ENCODE measurements at regions of chr1 and their contacts with region 1.

Region 1: GRCh38 chr1:161165742-161166668 is at the start of gene PPOX:
- DNase-seq: peak; percentile 92
- ATAC-seq: peak; percentile 97
- H3K4me3 ChIP-seq: peak within 1 kb of the TSS; percentile 86
- H3K27ac ChIP-seq: peak within 1 kb of the TSS; percentile 54
- H3K4me1 ChIP-seq: peaks cover 8% of the 10 kb centered on the region
- H3K27me3 ChIP-seq: no peaks in the 10 kb centered on the region
- CTCF ChIP-seq: peak; percentile 50 to 67 (median 61)
- EP300 ChIP-seq: no peak; a peak in 1 of 4 replicates
- POLR2A ChIP-seq: peak; percentile 88
- RAD21 ChIP-seq: peak; percentile 26; the same call in 1 of the 2 replicates
- polyA plus RNA-seq, gene PPOX: 8.9 to 16.3 TPM

Region 2: DNA sequence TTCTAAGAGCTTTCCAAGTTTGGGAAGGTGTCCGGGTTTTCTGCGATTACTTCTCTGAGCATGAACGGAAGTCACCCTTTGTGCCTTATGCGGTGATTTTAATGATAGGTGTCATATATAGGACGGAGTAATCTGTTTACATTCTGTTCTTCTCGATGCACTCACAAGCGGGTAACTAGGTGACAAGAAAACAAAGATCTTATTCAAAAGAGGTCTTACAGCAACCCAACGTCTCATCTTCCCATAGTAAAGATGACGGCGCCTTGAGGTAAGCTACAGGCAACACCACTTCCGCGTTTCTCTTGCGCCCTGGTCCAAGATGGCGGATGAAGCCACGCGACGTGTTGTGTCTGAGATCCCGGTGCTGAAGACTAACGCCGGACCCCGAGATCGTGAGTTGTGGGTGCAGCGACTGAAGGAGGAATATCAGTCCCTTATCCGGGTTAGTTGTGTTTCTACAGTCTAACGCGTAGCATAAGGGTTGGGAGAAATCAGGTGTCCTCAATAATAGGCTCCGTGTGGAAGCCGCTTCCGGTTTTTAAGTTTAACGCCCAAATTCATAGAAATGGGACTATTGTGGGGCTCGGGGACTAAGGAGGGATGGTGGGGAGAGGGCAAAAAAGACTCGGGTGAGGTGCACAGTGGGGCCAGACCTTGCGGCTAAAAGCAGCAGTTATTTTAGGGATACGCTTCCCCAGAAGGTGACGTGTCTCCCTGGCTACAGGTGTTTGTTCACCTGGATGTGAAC is 12.2 kb before region 1 on chr1 and contains the start of gene UFC1:
- CTCF ChIA-PET with region 1: interaction called, 38 read pairs
- POLR2A ChIA-PET with region 1: interaction called, 10 read pairs
- RAD21 ChIA-PET with region 1: interaction called, 6 read pairs
- SMC1A ChIA-PET with region 1: interaction called, 9 read pairs
- in situ Hi-C with region 1: no loop called
- intact Hi-C with region 1: no loop called
- DNase-seq: peak; percentile 83
- ATAC-seq: peak; percentile 98
- H3K4me3 ChIP-seq: peak within 1 kb of the TSS; percentile 89
- H3K27ac ChIP-seq: peak within 1 kb of the TSS; percentile 98
- H3K4me1 ChIP-seq: peaks cover 10% of the 10 kb centered on the region
- H3K27me3 ChIP-seq: no peaks in the 10 kb centered on the region
- CTCF ChIP-seq: no peak
- EP300 ChIP-seq: no peak
- POLR2A ChIP-seq: peak; percentile 97
- RAD21 ChIP-seq: no peak
- polyA plus RNA-seq, gene UFC1: 225 to 239 TPM

Region 3: GRCh38 chr1:161177112-161177935 is 11.3 kb after region 1 on chr1 and contains the start of gene B4GALT3:
- CTCF ChIA-PET with region 1: interaction called, 60 read pairs
- POLR2A ChIA-PET with region 1: interaction called, 17 read pairs
- RAD21 ChIA-PET with region 1: interaction called, 25 read pairs
- SMC1A ChIA-PET with region 1: interaction called, 15 read pairs
- in situ Hi-C with region 1: no loop called
- intact Hi-C with region 1: no loop called
- DNase-seq: no peak
- ATAC-seq: peak; percentile 93
- H3K4me3 ChIP-seq: peak within 1 kb of the TSS; percentile 90
- H3K27ac ChIP-seq: peak within 1 kb of the TSS; percentile 87
- H3K4me1 ChIP-seq: peaks cover 33% of the 10 kb centered on the region
- H3K27me3 ChIP-seq: no peaks in the 10 kb centered on the region
- CTCF ChIP-seq: 0 out of 6 replicates have a peak, but pooled peaks of 1 of the 3 experiments have one; percentile 8
- EP300 ChIP-seq: no peak
- POLR2A ChIP-seq: peak; percentile 94
- RAD21 ChIP-seq: peak; percentile 17; the same call in 1 of the 2 replicates
- polyA plus RNA-seq, gene B4GALT3: 27.1 to 39.7 TPM

Region 4: GRCh38 chr1:161185282-161185682 is 19.3 kb after region 1 on chr1:
- CTCF ChIA-PET with region 1: interaction called, 60 read pairs
- POLR2A ChIA-PET with region 1: interaction called, 17 read pairs
- RAD21 ChIA-PET with region 1: interaction called, 25 read pairs
- SMC1A ChIA-PET with region 1: interaction called, 15 read pairs
- in situ Hi-C with region 1: no loop called
- intact Hi-C with region 1: no loop called
- DNase-seq: peak; percentile 98
- ATAC-seq: peak; percentile 84
- H3K4me3 ChIP-seq: no peak overlapping the region
- H3K27ac ChIP-seq: peak overlapping the region; percentile 97
- H3K4me1 ChIP-seq: peaks cover 57% of the 10 kb centered on the region
- H3K27me3 ChIP-seq: no peaks in the 10 kb centered on the region
- CTCF ChIP-seq: no peak
- EP300 ChIP-seq: no peak; a peak in 1 of 4 replicates
- POLR2A ChIP-seq: peak; percentile 42; the same call in 1 of the 2 replicates
- RAD21 ChIP-seq: no peak

Region 5: GRCh38 chr1:161192476-161193465 is 26.8 kb after region 1 on chr1:
- CTCF ChIA-PET with region 1: interaction called, 20 read pairs
- POLR2A ChIA-PET with region 1: no interaction called
- RAD21 ChIA-PET with region 1: interaction called, 4 read pairs
- SMC1A ChIA-PET with region 1: interaction called, 8 read pairs
- in situ Hi-C with region 1: no loop called
- intact Hi-C with region 1: no loop called
- DNase-seq: no peak
- ATAC-seq: peak; percentile 94
- H3K4me3 ChIP-seq: no peak overlapping the region
- H3K27ac ChIP-seq: no peak overlapping the region
- H3K4me1 ChIP-seq: peaks cover 19% of the 10 kb centered on the region
- H3K27me3 ChIP-seq: no peaks in the 10 kb centered on the region
- CTCF ChIP-seq: peak; percentile 89 to 95 (median 89)
- EP300 ChIP-seq: no peak
- POLR2A ChIP-seq: no peak
- RAD21 ChIP-seq: peak; percentile 84

Region 6: DNA sequence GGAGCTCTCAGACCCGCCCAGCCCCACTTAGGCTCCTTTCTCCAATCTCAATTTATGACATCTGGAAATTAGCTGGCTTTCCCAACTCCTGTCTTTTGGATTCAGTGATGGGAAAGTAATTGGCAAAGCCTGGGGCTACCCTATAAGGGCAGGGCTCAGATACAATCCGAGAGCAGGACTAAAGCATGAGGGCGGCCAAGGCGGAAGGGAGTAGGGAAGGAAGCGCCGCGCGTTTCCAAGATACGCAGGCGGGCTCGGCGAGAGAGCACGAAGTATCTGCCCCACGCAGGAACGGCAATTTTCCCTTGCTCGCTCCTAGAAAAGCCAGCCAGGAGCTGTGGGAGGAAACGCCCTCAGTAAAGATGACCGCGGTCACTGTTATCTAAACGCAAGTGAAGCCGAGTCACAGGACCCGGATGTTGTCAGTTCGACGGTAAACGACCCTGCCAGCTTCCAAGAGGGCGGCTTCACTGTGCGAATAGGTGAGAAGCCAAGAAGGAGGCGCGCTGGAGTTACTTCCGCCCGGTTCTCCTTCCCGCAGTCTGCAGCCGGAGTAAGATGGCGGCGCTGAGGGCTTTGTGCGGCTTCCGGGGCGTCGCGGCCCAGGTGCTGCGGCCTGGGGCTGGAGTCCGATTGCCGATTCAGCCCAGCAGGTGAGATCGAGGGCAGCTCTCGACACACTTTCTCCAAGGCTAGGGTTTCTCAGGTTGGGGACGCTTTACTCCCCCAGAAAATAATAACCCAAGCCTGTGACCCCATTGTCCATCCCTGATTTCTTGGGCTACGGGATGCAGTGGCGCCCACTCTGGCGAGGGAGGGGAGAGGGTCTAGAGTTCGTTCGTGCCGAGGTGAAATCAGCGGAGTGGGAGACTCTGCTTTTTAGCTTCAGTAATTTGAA is 36.1 kb after region 1 on chr1 and contains the start of gene NDUFS2:
- CTCF ChIA-PET with region 1: interaction called, 37 read pairs
- POLR2A ChIA-PET with region 1: interaction called, 9 read pairs
- RAD21 ChIA-PET with region 1: interaction called, 11 read pairs
- SMC1A ChIA-PET with region 1: interaction called, 18 read pairs
- in situ Hi-C with region 1: no loop called
- intact Hi-C with region 1: no loop called
- DNase-seq: peak; percentile 94
- ATAC-seq: peak; percentile 99
- H3K4me3 ChIP-seq: peak within 1 kb of the TSS; percentile 95
- H3K27ac ChIP-seq: peak within 1 kb of the TSS; percentile 86
- H3K4me1 ChIP-seq: peaks cover 21% of the 10 kb centered on the region
- H3K27me3 ChIP-seq: no peaks in the 10 kb centered on the region
- CTCF ChIP-seq: peak in 1 of 3 experiments; percentile 5; a peak in 2 of 6 replicates
- EP300 ChIP-seq: no peak
- POLR2A ChIP-seq: peak; percentile 96
- RAD21 ChIP-seq: no peak
- polyA plus RNA-seq, gene NDUFS2: 66.5 to 93.9 TPM